SK-N-SH (cell line): ENCODE measurements at regions of chr17 and their contacts with region 1.

Region 1: GRCh38 chr17:50361561-50362480 is 11.2 kb downstream of the MRPL27 start:
- DNase-seq: peak; percentile 90
- H3K4me3 ChIP-seq: no peak overlapping the region; a peak in 1 of 4 replicates
- H3K27ac ChIP-seq: peak overlapping the region in 1 of 2 experiments; percentile 59; a peak in 2 of 4 replicates
- H3K4me1 ChIP-seq: peaks cover 9 to 25% of the 10 kb centered on the region in 2 experiments; a peak in 2 of 4 replicates
- H3K27me3 ChIP-seq: no peaks in the 10 kb centered on the region
- CTCF ChIP-seq: peak; percentile 92
- EP300 ChIP-seq: no peak
- RAD21 ChIP-seq: peak; percentile 66

Region 2: DNA sequence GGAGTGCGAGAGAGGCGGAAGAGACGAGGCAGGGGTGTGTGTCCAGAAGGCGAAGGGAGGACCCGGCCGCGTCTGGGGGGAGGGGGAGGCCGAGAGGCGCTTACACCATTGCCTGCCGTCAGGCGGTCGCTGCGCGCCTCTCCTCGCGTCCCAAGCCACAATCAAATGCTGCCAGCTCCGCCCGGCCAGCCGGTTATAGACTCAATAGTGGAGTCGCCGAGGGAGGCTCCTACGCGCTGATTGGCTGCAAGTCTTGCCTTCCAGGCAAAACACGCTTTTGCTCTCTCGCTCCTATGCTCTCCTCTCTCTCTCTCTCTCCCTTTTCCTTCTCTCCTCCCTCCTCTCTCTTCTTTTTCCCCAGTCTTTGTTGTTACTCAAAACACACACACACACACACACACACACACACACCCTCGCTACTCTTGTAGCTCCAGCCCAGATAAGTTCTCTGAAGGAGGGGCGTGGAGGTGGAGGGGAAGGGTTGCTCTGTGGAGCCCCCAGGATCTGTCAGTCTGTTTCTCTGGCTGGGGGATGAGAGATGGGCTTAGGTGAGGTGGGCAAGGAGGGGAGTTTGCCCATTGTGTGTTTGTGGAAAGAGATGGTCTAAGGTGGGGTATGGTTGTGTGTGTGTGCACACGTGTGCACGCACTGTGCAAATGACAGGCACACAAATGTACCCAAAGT is 366.6 kb before region 1 on chr17 and contains the start of gene DLX3:
- CTCF ChIA-PET with region 1: no interaction called
- POLR2A ChIA-PET with region 1: no interaction called
- DNase-seq: peak; percentile 81
- H3K4me3 ChIP-seq: peak within 1 kb of the TSS in 1 of 2 experiments; percentile 48; a peak in 1 of 4 replicates
- H3K27ac ChIP-seq: no peak within 1 kb of the TSS
- H3K4me1 ChIP-seq: peaks cover 6 to 12% of the 10 kb centered on the region in 2 experiments; a peak in 1 of 4 replicates
- H3K27me3 ChIP-seq: peaks cover 79% of the 10 kb centered on the region
- CTCF ChIP-seq: no peak
- EP300 ChIP-seq: no peak
- RAD21 ChIP-seq: no peak
- polyA plus RNA-seq, gene DLX3: not detected in 2 replicates

Region 3: GRCh38 chr17:50064258-50065001 is 297.4 kb before region 1 on chr17:
- CTCF ChIA-PET with region 1: no interaction called
- POLR2A ChIA-PET with region 1: no interaction called
- DNase-seq: peak; percentile 64
- H3K4me3 ChIP-seq: no peak overlapping the region
- H3K27ac ChIP-seq: peak overlapping the region; percentile 77 to 100
- H3K4me1 ChIP-seq: peaks cover 44 to 64% of the 10 kb centered on the region in 2 experiments
- H3K27me3 ChIP-seq: no peaks in the 10 kb centered on the region
- CTCF ChIP-seq: no peak
- EP300 ChIP-seq: peak in 1 of 2 experiments; percentile 89; a peak in 2 of 4 replicates
- RAD21 ChIP-seq: no peak

Region 4: GRCh38 chr17:50107790-50108414 is 253.9 kb before region 1 on chr17:
- CTCF ChIA-PET with region 1: no interaction called
- POLR2A ChIA-PET with region 1: no interaction called
- DNase-seq: no peak
- H3K4me3 ChIP-seq: no peak overlapping the region
- H3K27ac ChIP-seq: no peak overlapping the region
- H3K4me1 ChIP-seq: peaks cover 0 to 26% of the 10 kb centered on the region in 2 experiments; a peak in 1 of 4 replicates
- H3K27me3 ChIP-seq: no peaks in the 10 kb centered on the region
- CTCF ChIP-seq: no peak
- EP300 ChIP-seq: no peak
- RAD21 ChIP-seq: no peak

Region 5: DNA sequence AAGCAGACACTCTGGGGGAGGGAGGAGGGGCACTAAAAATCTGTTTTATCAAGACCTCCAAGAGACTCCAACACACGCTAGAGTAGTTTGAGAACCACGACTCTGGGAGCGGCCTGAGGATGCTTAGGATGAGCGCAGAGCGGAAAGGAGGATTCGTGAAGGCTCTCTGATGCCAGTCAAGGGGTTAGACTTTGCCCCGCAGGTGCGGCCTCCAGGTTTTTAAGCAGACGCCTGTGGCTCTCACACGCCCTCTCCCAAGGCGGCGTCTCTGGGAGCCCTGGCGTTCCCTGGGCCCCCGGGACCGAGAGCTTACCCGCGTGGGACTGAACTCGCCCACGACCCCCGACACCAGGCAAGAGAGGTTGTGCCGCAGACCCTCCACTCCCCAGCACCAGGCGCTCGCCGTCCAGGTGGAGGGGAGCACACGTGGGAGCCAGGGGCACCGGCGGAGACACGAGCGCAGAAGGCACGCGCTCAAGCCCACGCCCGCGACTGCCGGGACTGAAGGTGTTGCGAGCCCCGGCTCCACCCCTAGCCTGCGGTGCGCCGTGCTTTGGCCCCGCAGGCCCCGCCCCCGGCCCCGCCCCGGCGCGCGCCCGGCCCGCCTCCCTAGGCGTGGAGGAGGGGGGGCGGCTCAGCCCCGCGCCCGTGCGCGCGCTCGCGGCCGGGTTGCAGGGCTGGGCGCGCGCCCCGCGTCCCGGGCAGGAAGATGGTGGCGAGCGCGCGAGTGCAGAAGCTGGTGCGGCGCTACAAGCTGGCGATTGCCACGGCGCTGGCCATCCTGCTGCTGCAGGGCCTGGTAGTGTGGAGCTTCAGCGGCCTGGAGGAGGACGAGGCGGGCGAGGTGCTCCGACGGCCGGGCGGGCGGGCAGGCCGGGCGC is 16.1 kb before region 1 on chr17 and contains the start of gene XYLT2:
- CTCF ChIA-PET with region 1: interaction called, 56 read pairs
- POLR2A ChIA-PET with region 1: interaction called, 18 read pairs
- DNase-seq: peak; percentile 100
- H3K4me3 ChIP-seq: peak within 1 kb of the TSS; percentile 75 to 84
- H3K27ac ChIP-seq: peak within 1 kb of the TSS; percentile 36 to 83
- H3K4me1 ChIP-seq: peaks cover 11 to 20% of the 10 kb centered on the region in 2 experiments; a peak in 3 of 4 replicates
- H3K27me3 ChIP-seq: no peaks in the 10 kb centered on the region
- CTCF ChIP-seq: no peak
- EP300 ChIP-seq: no peak
- RAD21 ChIP-seq: no peak
- polyA plus RNA-seq, gene XYLT2: 26.5 and 28.4 TPM in 2 replicates

Region 6: GRCh38 chr17:50372758-50373556 is 11.1 kb after region 1 on chr17 and contains the starts of genes EME1 and MRPL27:
- CTCF ChIA-PET with region 1: interaction called, 51 read pairs
- POLR2A ChIA-PET with region 1: interaction called, 4 read pairs
- DNase-seq: peak; percentile 92
- H3K4me3 ChIP-seq: peak within 1 kb of the TSS; percentile 81 to 94
- H3K27ac ChIP-seq: peak within 1 kb of the TSS; percentile 93 to 96
- H3K4me1 ChIP-seq: peaks cover 0 to 27% of the 10 kb centered on the region in 2 experiments; a peak in 2 of 4 replicates
- H3K27me3 ChIP-seq: no peaks in the 10 kb centered on the region
- CTCF ChIP-seq: no peak
- EP300 ChIP-seq: no peak
- RAD21 ChIP-seq: no peak
- polyA plus RNA-seq, gene EME1: 16.9 and 21.5 TPM in 2 replicates
- polyA plus RNA-seq, gene MRPL27: 266 and 337 TPM in 2 replicates

Region 7: DNA sequence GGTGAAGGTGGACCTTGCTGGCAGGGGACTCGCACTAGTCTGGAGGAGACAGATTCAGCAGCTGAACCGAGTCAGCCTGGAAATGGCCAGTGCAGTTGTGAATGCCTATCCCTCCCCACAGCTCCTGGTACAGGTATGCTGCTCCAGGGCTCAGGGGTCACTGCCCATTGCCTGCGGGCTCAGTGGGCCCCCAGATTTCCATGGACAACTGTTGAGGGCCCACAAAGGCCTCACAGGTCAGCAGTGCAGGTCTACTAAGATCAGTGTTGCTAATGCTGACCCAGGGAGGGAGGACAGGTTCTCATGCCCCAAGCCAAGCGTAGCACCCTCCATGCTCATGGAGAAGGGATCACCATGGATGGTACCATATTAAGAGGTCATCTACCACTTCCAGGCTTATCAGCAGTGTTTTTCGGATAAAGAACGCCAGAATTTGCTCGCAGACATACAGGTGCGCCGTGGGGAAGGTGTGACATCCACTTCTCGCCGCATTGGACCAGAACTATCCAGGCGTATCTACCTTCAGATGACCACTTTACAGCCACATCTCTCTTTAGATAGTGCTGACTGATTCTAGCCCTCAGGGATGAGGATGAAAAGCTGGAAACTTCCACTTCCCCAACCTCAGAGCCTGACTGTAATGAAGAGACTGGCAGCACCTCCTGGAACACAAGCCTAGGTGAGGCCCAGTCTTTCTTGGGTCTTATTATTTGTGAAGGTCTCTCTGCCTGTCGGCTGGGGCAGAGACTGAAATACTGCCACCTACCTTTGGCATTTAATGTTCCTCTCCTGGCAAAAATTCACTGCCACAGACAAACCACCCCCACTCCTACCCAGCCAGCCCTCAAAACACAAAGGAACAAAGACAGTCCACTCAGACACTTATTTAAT is 18.8 kb after region 1 on chr17:
- CTCF ChIA-PET with region 1: interaction called, 51 read pairs
- POLR2A ChIA-PET with region 1: interaction called, 5 read pairs
- DNase-seq: no peak
- H3K4me3 ChIP-seq: no peak overlapping the region
- H3K27ac ChIP-seq: no peak overlapping the region; a peak in 1 of 4 replicates
- H3K4me1 ChIP-seq: peaks cover 0 to 9% of the 10 kb centered on the region in 2 experiments; a peak in 1 of 4 replicates
- H3K27me3 ChIP-seq: no peaks in the 10 kb centered on the region
- CTCF ChIP-seq: peak; percentile 28
- EP300 ChIP-seq: no peak
- RAD21 ChIP-seq: no peak

Region 8: GRCh38 chr17:50425682-50426471 is 64.1 kb after region 1 on chr17 and contains the start of gene ACSF2:
- CTCF ChIA-PET with region 1: interaction called, 11 read pairs
- POLR2A ChIA-PET with region 1: no interaction called
- DNase-seq: peak; percentile 94
- H3K4me3 ChIP-seq: peak within 1 kb of the TSS; percentile 69 to 71
- H3K27ac ChIP-seq: peak within 1 kb of the TSS; percentile 74 to 81
- H3K4me1 ChIP-seq: peaks cover 21 to 23% of the 10 kb centered on the region in 2 experiments; a peak in 3 of 4 replicates
- H3K27me3 ChIP-seq: no peaks in the 10 kb centered on the region
- CTCF ChIP-seq: no peak
- EP300 ChIP-seq: 0 out of 4 replicates have a peak, but pooled peaks of 1 of the 2 experiments have one; percentile 15
- RAD21 ChIP-seq: no peak
- polyA plus RNA-seq, gene ACSF2: 46.6 and 49.5 TPM in 2 replicates

Region 9: GRCh38 chr17:50541716-50542688 is 180.2 kb after region 1 on chr17:
- CTCF ChIA-PET with region 1: no interaction called
- POLR2A ChIA-PET with region 1: no interaction called
- DNase-seq: peak; percentile 100
- H3K4me3 ChIP-seq: peak overlapping the region; percentile 56 to 61
- H3K27ac ChIP-seq: peak overlapping the region; percentile 34 to 83
- H3K4me1 ChIP-seq: peaks cover 12 to 22% of the 10 kb centered on the region in 2 experiments; a peak in 3 of 4 replicates
- H3K27me3 ChIP-seq: no peaks in the 10 kb centered on the region
- CTCF ChIP-seq: peak; percentile 46
- EP300 ChIP-seq: no peak
- RAD21 ChIP-seq: no peak